WTC11 (cell line): ENCODE measurements at regions of chr17 and their contacts with region 1.

Region 1: GRCh38 chr17:74203439-74204240 is at the start of gene RPL38:
- DNase-seq: peak; percentile 98
- ATAC-seq: peak; percentile 80
- H3K4me3 Mint-ChIP-seq: peak within 1 kb of the TSS; percentile 100
- H3K27ac Mint-ChIP-seq: peak within 1 kb of the TSS; percentile 99
- H3K4me1 Mint-ChIP-seq: peaks cover 40% of the 10 kb centered on the region
- H3K27me3 Mint-ChIP-seq: peaks cover 24% of the 10 kb centered on the region
- CTCF ChIP-seq: peak; percentile 91
- total RNA-seq, gene RPL38: 1,170 to 1,273 TPM (median 1,266 TPM) in 3 replicates

Region 2: GRCh38 chr17:73943416-73944110 is 260.1 kb before region 1 on chr17:
- CTCF ChIA-PET with region 1: no interaction called
- POLR2A ChIA-PET with region 1: no interaction called
- DNase-seq: no peak
- ATAC-seq: no peak
- H3K4me3 Mint-ChIP-seq: no peak overlapping the region
- H3K27ac Mint-ChIP-seq: no peak overlapping the region
- H3K4me1 Mint-ChIP-seq: no peaks in the 10 kb centered on the region
- H3K27me3 Mint-ChIP-seq: peaks cover 16% of the 10 kb centered on the region
- CTCF ChIP-seq: no peak

Region 3: GRCh38 chr17:74070374-74070773 is 133.3 kb before region 1 on chr17:
- CTCF ChIA-PET with region 1: interaction called, 20 read pairs
- POLR2A ChIA-PET with region 1: no interaction called
- DNase-seq: no peak
- ATAC-seq: no peak
- H3K4me3 Mint-ChIP-seq: no peak overlapping the region
- H3K27ac Mint-ChIP-seq: no peak overlapping the region
- H3K4me1 Mint-ChIP-seq: no peaks in the 10 kb centered on the region
- H3K27me3 Mint-ChIP-seq: peaks cover 3% of the 10 kb centered on the region; the same call in 1 of the 2 replicates
- CTCF ChIP-seq: no peak

Region 4: GRCh38 chr17:74118504-74118903 is 85.1 kb before region 1 on chr17:
- CTCF ChIA-PET with region 1: interaction called, 59 read pairs
- POLR2A ChIA-PET with region 1: interaction called, 3 read pairs
- DNase-seq: peak; percentile 79
- ATAC-seq: peak; percentile 87
- H3K4me3 Mint-ChIP-seq: 0 out of 2 replicates have a peak overlapping the region, but pooled peaks have one; percentile 13
- H3K27ac Mint-ChIP-seq: peak overlapping the region; percentile 69
- H3K4me1 Mint-ChIP-seq: peaks cover 51% of the 10 kb centered on the region
- H3K27me3 Mint-ChIP-seq: peaks cover 6% of the 10 kb centered on the region; the same call in 1 of the 2 replicates
- CTCF ChIP-seq: 0 out of 2 replicates have a peak, but pooled peaks have one; percentile 27

Region 5: GRCh38 chr17:74182041-74182723 is 21.5 kb before region 1 on chr17:
- CTCF ChIA-PET with region 1: interaction called, 99 read pairs
- POLR2A ChIA-PET with region 1: no interaction called
- DNase-seq: no peak
- ATAC-seq: no peak
- H3K4me3 Mint-ChIP-seq: no peak overlapping the region
- H3K27ac Mint-ChIP-seq: no peak overlapping the region
- H3K4me1 Mint-ChIP-seq: peaks cover 12% of the 10 kb centered on the region
- H3K27me3 Mint-ChIP-seq: peaks cover 8% of the 10 kb centered on the region
- CTCF ChIP-seq: no peak

Region 6: DNA sequence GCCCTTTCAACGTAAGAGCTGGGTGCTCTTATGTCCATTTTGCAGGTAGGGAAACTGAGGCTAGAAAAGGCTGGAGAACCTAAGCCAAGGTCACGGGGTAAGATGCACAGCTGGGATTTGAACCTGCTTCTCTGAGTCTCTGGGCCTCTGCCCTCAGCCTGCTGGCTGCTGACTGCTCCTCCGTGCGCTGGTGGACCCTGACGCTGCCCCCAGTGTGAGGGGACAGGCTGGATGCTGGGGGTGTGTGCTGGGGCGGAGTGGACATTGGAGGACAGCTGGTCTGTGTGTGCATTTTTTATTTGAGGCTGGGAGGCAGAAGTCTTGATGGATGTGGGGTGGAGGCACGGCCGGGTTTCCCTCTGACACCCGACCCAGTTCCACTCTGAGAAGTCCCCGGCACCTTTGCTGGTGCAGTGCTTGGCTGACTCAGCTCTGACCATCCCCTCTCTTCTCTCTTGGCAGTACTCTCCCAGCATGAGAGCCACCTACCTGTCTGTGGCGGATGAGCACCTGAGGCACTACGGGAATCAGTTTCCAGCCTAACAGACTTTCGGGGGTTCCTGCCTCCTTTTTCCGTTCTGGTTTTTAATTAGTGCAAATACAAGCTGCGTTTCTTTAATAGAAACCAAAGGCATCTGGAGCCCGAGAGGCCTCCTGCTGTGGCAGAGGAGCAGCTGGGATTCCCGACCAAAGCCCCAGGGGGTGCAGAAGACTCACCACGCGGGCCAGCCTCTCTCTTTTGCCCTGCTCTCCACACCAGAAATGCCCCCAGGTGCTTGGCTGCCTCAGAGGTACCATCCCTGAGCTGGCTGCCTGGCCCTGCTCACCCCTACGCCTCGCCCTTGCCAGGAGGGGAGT is 56.3 kb after region 1 on chr17:
- CTCF ChIA-PET with region 1: interaction called, 13 read pairs
- POLR2A ChIA-PET with region 1: no interaction called
- DNase-seq: peak; percentile 22
- ATAC-seq: peak; percentile 65
- H3K4me3 Mint-ChIP-seq: peak overlapping the region; percentile 31; the same call in 1 of the 2 replicates
- H3K27ac Mint-ChIP-seq: peak overlapping the region; percentile 60; the same call in 1 of the 2 replicates
- H3K4me1 Mint-ChIP-seq: peaks cover 18% of the 10 kb centered on the region
- H3K27me3 Mint-ChIP-seq: no peaks in the 10 kb centered on the region; the same call in 1 of the 2 replicates
- CTCF ChIP-seq: no peak